Activated naive CD4-positive, alpha-beta T cell treated with anti-CD3 and anti-CD28 coated beads for 36 hours (primary cell): ENCODE measurements at regions of chr14 and their contacts with region 1.

Region 1: GRCh38 chr14:74612350-74613021 is 449 bp upstream of the LTBP2 start:
- DNase-seq: peak; percentile 77
- H3K4me3 Mint-ChIP-seq: peak overlapping the region; percentile 62
- H3K27ac Mint-ChIP-seq: no peak overlapping the region
- H3K4me1 Mint-ChIP-seq: peaks cover 40% of the 10 kb centered on the region
- H3K27me3 Mint-ChIP-seq: peaks cover 14% of the 10 kb centered on the region

Region 2: DNA sequence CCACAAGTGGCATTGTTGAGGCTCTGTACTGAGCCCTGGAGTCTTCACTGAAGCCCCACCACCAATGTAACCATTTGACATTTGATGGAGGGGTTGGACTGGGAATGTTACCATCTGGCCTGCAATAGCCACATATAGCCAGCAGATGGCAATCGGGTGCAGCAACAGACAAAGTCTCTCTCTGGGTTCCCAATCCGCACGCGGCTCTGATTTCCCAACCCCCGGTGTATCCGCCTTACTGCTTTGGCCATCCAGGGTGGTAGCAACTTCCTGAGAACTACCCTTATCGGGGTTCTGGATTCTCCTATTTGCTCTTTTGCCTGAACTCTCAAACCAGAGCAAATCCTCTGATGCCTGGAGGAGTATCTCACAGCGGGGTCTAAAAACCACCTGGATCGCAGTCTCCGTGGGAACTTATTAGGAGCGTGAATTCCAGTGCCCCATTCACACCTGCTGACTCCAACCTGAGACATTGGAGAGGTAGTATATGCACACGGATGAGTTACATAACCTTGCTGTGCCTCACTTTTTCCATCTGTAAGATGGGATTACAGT is 250.0 kb before region 1 on chr14:
- CTCF ChIA-PET with region 1: interaction called, 3 read pairs
- intact Hi-C with region 1: loop called (anchors 2 kb)
- DNase-seq: peak; percentile 82
- H3K4me3 Mint-ChIP-seq: no peak overlapping the region
- H3K27ac Mint-ChIP-seq: no peak overlapping the region
- H3K4me1 Mint-ChIP-seq: no peaks in the 10 kb centered on the region
- H3K27me3 Mint-ChIP-seq: peaks cover 8% of the 10 kb centered on the region

Region 3: GRCh38 chr14:74579447-74580274 is 32.8 kb before region 1 on chr14:
- CTCF ChIA-PET with region 1: interaction called, 8 read pairs
- intact Hi-C with region 1: loop called (anchors 1 kb)
- DNase-seq: peak; percentile 88
- H3K4me3 Mint-ChIP-seq: no peak overlapping the region
- H3K27ac Mint-ChIP-seq: peak overlapping the region; percentile 82
- H3K4me1 Mint-ChIP-seq: peaks cover 36% of the 10 kb centered on the region
- H3K27me3 Mint-ChIP-seq: peaks cover 2% of the 10 kb centered on the region

Region 4: GRCh38 chr14:74712499-74713394 is 100.3 kb after region 1 on chr14 and contains the starts of genes AREL1 and FCF1:
- CTCF ChIA-PET with region 1: interaction called, 4 read pairs
- intact Hi-C with region 1: loop called (anchors 2 kb)
- DNase-seq: peak; percentile 93
- H3K4me3 Mint-ChIP-seq: peak within 1 kb of the TSS; percentile 97
- H3K27ac Mint-ChIP-seq: peak within 1 kb of the TSS; percentile 90
- H3K4me1 Mint-ChIP-seq: peaks cover 47% of the 10 kb centered on the region
- H3K27me3 Mint-ChIP-seq: no peaks in the 10 kb centered on the region
- total RNA-seq, gene AREL1: 29.1 to 29.5 TPM
- total RNA-seq, gene FCF1: 83.8 to 87.5 TPM

Region 5: DNA sequence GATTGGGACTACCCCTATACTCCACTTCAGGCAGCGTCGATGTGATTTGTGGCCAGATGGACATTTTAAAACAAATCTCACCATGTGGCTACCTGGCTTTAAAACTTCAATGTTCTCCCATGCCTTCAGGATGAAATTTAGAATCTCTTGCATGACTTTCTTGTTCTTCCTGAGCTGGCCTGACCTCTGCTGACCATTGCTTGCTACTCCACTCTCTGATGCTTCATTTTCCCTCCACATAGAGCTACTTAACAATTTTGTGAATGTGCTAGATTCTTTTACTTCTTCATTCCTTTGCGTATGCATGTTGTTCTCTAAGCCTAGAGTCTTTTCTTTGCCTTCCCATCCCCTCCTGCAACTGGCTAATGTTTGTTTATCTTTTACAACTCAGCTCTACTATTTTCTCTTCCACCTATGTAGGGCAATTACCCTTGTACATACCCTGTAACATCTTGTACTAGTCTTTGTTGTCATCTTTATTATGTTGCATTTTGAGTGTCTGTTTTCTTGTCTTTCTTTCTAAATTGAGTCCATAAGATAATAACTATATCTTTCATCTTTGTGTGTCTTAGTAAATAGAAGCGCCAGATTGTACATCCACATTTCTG is 191.8 kb after region 1 on chr14:
- CTCF ChIA-PET with region 1: interaction called, 6 read pairs
- intact Hi-C with region 1: loop called (anchors 1 kb)
- DNase-seq: peak; percentile 54
- H3K4me3 Mint-ChIP-seq: no peak overlapping the region
- H3K27ac Mint-ChIP-seq: no peak overlapping the region
- H3K4me1 Mint-ChIP-seq: peaks cover 5% of the 10 kb centered on the region
- H3K27me3 Mint-ChIP-seq: no peaks in the 10 kb centered on the region